ENCODE measurements at regions of chr9 and their contacts with region 1.

Region 1: GRCh38 chr9:106717686-106718085 is 145.3 kb upstream of the ZNF462 start:
- ATAC-seq: no peak
- H3K4me3 ChIP-seq: no peak overlapping the region
- H3K27ac ChIP-seq: no peak overlapping the region
- H3K4me1 ChIP-seq: no peaks in the 10 kb centered on the region

Region 2: GRCh38 chr9:106800651-106801270 is 83.1 kb after region 1 on chr9:
- in situ Hi-C with region 1: loop called in 1 of 9 experiments (anchors 25 kb)
- ATAC-seq: no peak
- H3K4me3 ChIP-seq: no peak overlapping the region
- H3K27ac ChIP-seq: no peak overlapping the region
- H3K4me1 ChIP-seq: no peaks in the 10 kb centered on the region

Region 3: DNA sequence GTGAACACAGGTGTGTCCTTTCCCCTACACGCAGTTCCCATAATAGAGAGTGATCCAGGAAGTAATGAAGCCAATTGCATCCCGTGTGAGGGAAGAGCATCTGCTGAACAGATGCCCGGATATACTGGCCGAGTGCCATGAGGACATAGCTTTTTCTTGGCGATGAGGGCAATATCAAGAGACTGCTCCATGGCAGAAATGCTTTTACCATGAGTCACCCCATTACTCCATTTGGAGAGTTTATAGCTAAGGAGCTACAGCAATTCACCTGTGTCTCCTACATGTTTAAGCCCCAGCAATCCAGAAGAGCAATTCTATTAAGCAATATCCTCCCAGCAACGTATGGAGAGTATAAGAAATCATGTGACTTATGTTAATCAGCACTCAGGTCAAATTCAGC is 993.9 kb after region 1 on chr9:
- in situ Hi-C with region 1: no loop called
- ATAC-seq: peak in 4 of 8 experiments; percentile 41 to 92 (median 84)
- H3K4me3 ChIP-seq: no peak overlapping the region
- H3K27ac ChIP-seq: no peak overlapping the region
- H3K4me1 ChIP-seq: peaks cover 0 to 10% of the 10 kb centered on the region in 2 donors

Measured in motor neuron (in vitro differentiated cells).